ENCODE measurements at regions of chr2 and their contacts with region 1.

Region 1: GRCh38 chr2:235505181-235505741 is 11.4 kb downstream of the AGAP1 start:
- DNase-seq: peak; percentile 55

Region 2: GRCh38 chr2:233822781-233823730 is 1682.2 kb before region 1 on chr2:
- intact Hi-C with region 1: loop called in 1 of 2 experiments (anchors 5 kb)
- DNase-seq: peak; percentile 75

Region 3: GRCh38 chr2:235779444-235779896 is 274.2 kb after region 1 on chr2:
- intact Hi-C with region 1: no loop called
- DNase-seq: peak; percentile 89

Measured in posterior vena cava (tissue), 2 donors.